IMR-90 (cell line): ENCODE measurements at regions of chr13 and their contacts with region 1.

Region 1: DNA sequence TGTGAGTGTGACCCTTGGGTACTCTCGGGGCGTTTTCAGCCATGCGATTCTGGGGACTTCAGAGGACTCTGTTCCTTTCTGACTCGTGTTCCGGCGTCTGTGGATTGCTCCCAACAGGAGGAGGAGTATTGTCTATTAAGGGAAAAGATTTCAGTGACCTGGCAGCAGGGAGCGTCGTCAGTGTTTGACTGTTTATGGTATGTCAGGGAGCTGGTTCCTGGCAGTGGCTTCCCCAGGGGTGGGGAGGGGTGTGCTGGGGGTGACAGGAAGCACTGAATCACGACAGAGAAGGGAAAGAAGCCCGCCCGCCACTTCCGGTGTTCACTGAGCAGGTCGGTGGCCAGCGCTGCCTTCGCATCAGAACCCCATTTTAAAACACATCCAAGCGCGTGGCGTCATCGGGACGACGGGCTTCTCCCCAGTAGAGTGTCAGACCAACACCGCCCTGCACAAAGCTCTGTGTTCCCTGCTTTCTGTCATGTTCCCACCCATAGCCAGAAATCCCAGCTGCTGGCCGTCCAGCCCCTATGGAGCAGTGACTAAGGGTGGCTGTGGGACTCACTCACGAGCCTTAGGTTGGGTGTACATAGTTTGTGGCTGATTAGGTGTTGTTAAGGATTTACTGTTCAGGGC is 33.8 kb downstream of the COL4A2 start:
- DNase-seq: peak; percentile 93
- ATAC-seq: peak; percentile 59
- H3K4me3 ChIP-seq: no peak overlapping the region
- H3K27ac ChIP-seq: peak overlapping the region; percentile 88
- H3K4me1 ChIP-seq: peaks cover 53% of the 10 kb centered on the region
- H3K27me3 ChIP-seq: no peaks in the 10 kb centered on the region
- CTCF ChIP-seq: 0 out of 2 replicates have a peak, but pooled peaks have one; percentile 0
- POLR2A ChIP-seq: peak; percentile 68
- RAD21 ChIP-seq: 0 out of 2 replicates have a peak, but pooled peaks have one; percentile 17

Region 2: DNA sequence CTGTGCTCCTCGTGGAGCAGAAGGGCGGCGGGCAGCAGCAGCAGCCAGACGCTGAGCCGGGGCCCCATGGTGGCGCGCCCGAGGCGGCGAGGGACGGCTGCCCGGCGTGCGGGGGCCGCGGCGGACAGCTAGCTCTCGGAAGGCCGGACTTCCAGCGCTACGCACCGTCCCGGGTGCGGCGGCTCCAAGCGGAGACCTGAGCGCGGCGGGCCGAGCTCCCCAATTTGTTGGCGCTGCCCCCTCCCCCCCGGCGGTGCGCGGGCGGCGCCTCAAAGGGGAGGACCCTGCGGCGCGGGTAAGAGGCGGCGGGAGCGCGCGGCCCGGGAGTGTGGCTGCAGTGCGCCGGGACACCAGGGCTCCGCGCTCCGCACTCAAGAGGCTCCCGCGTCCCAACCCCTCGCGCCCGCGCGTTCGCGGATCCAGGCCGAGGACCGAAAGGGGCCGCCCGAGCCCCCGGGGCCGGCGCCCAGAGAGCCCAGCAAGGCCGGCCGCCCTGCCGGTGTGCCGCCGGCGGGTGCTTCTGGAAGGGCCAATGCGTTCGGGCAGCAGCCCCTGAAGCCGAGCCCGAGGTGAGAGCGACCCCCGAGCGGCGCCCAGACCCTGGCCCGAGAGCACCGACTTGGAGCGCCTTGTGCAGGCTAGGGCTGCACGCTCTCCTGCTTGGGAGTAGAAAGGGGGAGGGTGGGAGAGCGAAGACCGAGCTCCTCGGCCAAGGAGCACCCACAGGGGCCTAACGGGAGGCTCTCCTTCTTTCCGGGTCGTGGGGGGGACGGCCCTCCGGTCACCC is 33.8 kb before region 1 on chr13 and contains the starts of genes COL4A1 and COL4A2:
- CTCF ChIA-PET with region 1: no interaction called
- POLR2A ChIA-PET with region 1: interaction called, 5 read pairs
- dilution Hi-C with region 1: no loop called
- in situ Hi-C with region 1: no loop called
- intact Hi-C with region 1: loop called (anchors 2 kb)
- DNase-seq: peak; percentile 77
- ATAC-seq: peak; percentile 67
- H3K4me3 ChIP-seq: peak within 1 kb of the TSS; percentile 84
- H3K27ac ChIP-seq: peak within 1 kb of the TSS; percentile 78
- H3K4me1 ChIP-seq: peaks cover 34% of the 10 kb centered on the region
- H3K27me3 ChIP-seq: no peaks in the 10 kb centered on the region
- CTCF ChIP-seq: no peak
- POLR2A ChIP-seq: peak; percentile 99
- RAD21 ChIP-seq: no peak; the same call in 1 of the 2 replicates
- total RNA-seq, gene COL4A1: 230 and 263 TPM in 2 replicates
- total RNA-seq, gene COL4A2: 90.7 and 97.5 TPM in 2 replicates

Region 3: GRCh38 chr13:110396913-110397381 is 56.0 kb after region 1 on chr13:
- CTCF ChIA-PET with region 1: no interaction called
- POLR2A ChIA-PET with region 1: no interaction called
- dilution Hi-C with region 1: no loop called
- in situ Hi-C with region 1: no loop called
- intact Hi-C with region 1: loop called (anchors 2 kb)
- DNase-seq: peak; percentile 100
- ATAC-seq: peak; percentile 87
- H3K4me3 ChIP-seq: no peak overlapping the region
- H3K27ac ChIP-seq: peak overlapping the region; percentile 73
- H3K4me1 ChIP-seq: peaks cover 28% of the 10 kb centered on the region
- H3K27me3 ChIP-seq: no peaks in the 10 kb centered on the region
- CTCF ChIP-seq: no peak
- POLR2A ChIP-seq: no peak; the same call in none of the 2 replicates
- RAD21 ChIP-seq: no peak; the same call in 1 of the 2 replicates